Transverse colon (tissue), 4 donors: ENCODE measurements at regions of chr19 and their contacts with region 1.

Region 1: DNA sequence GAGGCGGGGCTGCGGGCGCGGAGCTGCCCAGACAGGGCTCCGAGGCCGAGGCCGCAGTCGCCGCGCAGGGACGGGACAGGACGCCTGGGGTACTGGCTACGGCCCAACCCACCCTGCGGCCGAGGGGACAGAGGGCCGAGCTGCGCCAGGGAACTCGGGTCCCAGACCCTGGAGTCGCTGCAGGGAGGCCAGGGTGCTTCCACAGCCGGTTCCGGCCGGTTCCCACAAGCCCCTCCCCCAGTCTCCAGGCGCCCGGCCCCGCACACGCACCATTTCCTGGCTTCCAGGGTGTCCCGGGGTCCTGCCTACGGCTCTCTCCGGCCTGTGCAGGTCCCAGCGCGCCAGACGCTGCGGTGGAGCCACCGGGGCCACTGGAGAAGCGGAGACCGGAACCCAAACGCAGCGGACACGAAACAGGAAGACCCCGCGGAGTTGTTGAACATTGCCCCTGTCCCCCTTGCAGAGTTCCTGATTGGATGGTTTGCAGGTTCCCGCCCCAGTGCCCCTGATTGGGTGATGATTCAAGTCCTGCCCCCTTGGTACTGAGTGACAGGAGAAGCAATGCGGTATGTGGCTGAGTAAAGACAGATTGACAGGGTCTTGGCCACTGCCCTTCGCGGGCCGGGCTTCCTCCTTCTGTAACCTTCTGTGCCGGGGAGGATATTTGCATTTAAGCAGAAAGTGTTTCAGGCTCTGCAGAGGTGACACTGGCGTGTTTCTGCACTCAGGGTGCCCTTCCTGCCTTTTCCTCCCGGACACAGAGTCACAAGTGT is at the start of gene ZNF564:
- DNase-seq: peak; percentile 96
- H3K4me3 ChIP-seq: peak within 1 kb of the TSS; percentile 71 to 98 (median 86)
- H3K27ac ChIP-seq: peak within 1 kb of the TSS; percentile 91 to 99 (median 98)
- H3K4me1 ChIP-seq: peaks cover 13 to 35% (median 22%) of the 10 kb centered on the region in 4 donors
- H3K27me3 ChIP-seq: no peaks in the 10 kb centered on the region
- CTCF ChIP-seq: no peak
- EP300 ChIP-seq: no peak
- POLR2A ChIP-seq: peak; percentile 93
- total RNA-seq, gene ZNF564: 16.4 to 25.6 (median 19.6) TPM

Region 2: DNA sequence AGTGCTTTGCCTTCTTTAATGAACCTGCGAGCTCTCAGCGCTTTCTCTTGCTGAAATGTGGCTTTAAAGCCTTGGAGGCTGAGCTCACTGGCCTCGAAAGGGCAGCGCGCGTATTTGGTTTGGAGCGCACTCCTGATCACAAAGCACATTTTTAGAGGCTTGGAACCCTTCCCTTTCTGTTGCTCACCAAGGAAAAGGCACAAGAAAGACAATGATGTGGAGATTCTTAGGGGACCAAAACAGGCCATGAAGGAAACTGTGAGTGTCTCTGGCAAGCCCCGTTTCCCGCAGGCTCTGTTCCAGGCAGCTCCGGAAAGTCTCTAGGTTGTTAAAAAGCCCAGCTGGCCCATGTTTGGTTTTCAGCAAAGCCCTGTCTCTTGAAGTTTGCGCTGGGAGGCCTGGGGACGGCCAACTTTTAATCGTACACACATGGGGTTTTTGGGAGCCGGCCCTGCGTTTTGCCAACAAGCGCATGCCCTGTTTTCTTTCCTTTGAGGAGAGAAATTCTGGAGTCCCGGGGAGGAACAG is 1386.3 kb before region 1 on chr19:
- in situ Hi-C with region 1: no loop called
- intact Hi-C with region 1: loop called (anchors 5 kb)
- DNase-seq: peak; percentile 70
- H3K4me3 ChIP-seq: no peak overlapping the region
- H3K27ac ChIP-seq: peak overlapping the region; percentile 87 to 96 (median 91)
- H3K4me1 ChIP-seq: peaks cover 25 to 41% (median 26%) of the 10 kb centered on the region in 4 donors
- H3K27me3 ChIP-seq: no peaks in the 10 kb centered on the region
- CTCF ChIP-seq: no peak
- EP300 ChIP-seq: no peak
- POLR2A ChIP-seq: no peak

Region 3: GRCh38 chr19:11756965-11757364 is 794.3 kb before region 1 on chr19:
- in situ Hi-C with region 1: no loop called
- intact Hi-C with region 1: no loop called
- DNase-seq: no peak
- H3K4me3 ChIP-seq: no peak overlapping the region
- H3K27ac ChIP-seq: no peak overlapping the region
- H3K4me1 ChIP-seq: no peaks in the 10 kb centered on the region
- H3K27me3 ChIP-seq: no peaks in the 10 kb centered on the region
- CTCF ChIP-seq: no peak
- EP300 ChIP-seq: no peak
- POLR2A ChIP-seq: no peak

Region 4: DNA sequence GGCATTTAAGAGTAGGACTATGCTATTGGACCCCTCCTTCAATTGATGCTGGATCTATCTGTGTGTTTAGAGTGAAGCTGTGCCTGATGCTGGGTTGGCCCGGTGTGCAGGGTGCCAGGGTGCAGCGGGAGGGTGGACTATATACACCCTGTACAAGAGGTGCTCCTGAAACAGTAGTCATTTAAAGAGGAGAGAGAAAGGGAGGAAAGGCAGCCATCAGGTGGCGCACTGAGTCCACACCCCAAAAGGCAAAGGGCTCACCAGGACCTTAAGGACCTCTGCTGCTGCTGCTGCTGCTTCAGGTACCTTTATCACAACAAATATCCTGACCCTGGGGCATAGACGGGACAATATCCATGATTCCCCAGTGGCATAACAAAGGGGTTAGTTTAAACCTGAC is 349.0 kb before region 1 on chr19:
- in situ Hi-C with region 1: no loop called
- intact Hi-C with region 1: no loop called
- DNase-seq: peak; percentile 64
- H3K4me3 ChIP-seq: no peak overlapping the region
- H3K27ac ChIP-seq: no peak overlapping the region
- H3K4me1 ChIP-seq: no peaks in the 10 kb centered on the region
- H3K27me3 ChIP-seq: no peaks in the 10 kb centered on the region
- CTCF ChIP-seq: peak; percentile 22 to 49 (median 44)
- EP300 ChIP-seq: no peak
- POLR2A ChIP-seq: no peak

Region 5: DNA sequence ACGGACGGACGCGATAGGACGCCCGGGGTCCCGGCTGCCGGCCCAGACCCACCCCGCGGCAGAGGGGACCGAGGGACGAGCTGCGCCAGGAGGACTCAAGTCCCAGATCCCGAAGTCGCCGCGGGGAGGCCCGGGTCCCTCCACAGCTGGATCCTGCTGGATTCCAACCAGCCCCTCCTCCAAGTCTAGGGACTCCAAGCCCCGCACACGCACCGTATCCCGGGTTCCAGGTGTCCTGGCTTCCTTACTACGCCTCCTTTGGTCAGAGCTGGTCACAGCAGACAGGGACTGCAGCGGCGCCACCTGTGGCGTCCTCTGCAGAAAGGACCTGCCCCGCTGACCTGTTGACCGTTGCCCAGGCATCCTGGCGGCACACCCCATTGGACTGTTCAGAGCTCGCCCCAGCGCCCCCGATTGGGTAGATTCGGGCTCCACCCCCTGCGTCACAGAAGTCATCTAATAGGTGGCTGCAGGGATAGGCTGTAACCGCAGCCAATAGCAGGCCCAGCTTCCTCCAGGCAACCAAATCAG is 37.6 kb before region 1 on chr19:
- in situ Hi-C with region 1: no loop called
- intact Hi-C with region 1: no loop called
- DNase-seq: no peak
- H3K4me3 ChIP-seq: no peak overlapping the region
- H3K27ac ChIP-seq: no peak overlapping the region
- H3K4me1 ChIP-seq: no peaks in the 10 kb centered on the region
- H3K27me3 ChIP-seq: no peaks in the 10 kb centered on the region
- CTCF ChIP-seq: no peak
- EP300 ChIP-seq: no peak
- POLR2A ChIP-seq: no peak

Region 6: GRCh38 chr19:12603714-12604113 is 52.5 kb after region 1 on chr19:
- in situ Hi-C with region 1: no loop called
- intact Hi-C with region 1: no loop called
- DNase-seq: peak; percentile 17
- H3K4me3 ChIP-seq: no peak overlapping the region
- H3K27ac ChIP-seq: no peak overlapping the region
- H3K4me1 ChIP-seq: no peaks in the 10 kb centered on the region
- H3K27me3 ChIP-seq: no peaks in the 10 kb centered on the region
- CTCF ChIP-seq: no peak
- EP300 ChIP-seq: no peak
- POLR2A ChIP-seq: no peak